Aorta (tissue), 5 donors: ENCODE measurements at regions of chr4 and their contacts with region 1.

Region 1: DNA sequence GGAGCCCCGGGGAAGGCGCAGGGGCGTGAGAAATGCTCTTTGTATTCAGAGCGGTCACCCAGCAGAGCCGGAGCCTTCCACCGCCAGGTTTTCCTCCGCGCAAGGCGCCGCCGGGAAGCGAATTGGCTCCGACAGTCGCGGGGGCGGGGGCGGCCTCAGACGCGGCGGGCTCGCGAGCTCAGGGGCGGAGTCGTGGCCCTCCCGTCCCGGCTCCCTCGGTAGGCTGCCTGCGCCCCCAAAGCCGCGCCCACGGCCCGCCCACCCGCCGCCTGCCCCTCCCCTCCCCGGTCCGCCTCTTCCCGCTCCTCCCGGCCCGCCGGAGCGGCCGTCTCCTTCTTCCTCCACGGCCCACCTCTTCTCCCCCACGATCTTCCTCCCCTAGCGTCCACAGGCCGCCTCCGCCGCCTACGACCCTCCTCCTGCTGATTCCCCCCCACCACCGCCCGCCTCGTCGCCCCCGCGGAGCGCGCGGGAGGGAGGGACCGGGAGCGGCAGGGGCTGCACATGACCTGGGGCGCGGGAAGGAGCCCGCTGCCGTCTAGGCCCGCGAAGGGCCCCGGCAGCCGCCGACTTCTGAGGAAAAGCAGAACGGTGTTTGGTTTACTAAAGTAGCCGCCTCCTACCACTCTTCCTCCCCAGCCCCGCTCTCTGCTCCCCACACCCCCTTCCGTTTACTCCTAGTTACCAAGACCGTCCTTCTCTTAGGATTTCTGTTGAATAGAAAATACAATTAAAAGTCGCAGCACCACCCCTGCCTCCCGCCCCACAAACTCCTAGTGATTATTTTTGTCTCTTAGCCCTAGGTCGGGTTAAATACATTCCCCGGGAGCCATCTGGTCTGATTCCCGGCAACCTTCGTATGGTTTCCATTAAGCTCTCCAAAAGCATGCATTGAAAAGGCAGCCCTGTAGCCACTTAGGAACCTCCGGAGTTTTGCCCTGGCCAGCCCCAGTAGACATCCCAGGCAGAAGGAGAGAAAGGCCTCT is 53.2 kb downstream of the C4orf51 start:
- DNase-seq: peak; percentile 97 to 98
- ATAC-seq: peak; percentile 94
- H3K4me3 ChIP-seq: peak overlapping the region; percentile 28 to 53
- H3K27ac ChIP-seq: peak overlapping the region; percentile 98 to 99
- H3K4me1 ChIP-seq: peaks cover 0 to 2% of the 10 kb centered on the region in 2 donors
- H3K27me3 ChIP-seq: no peaks in the 10 kb centered on the region

Region 2: GRCh38 chr4:145180298-145181090 is 552.7 kb before region 1 on chr4 and contains the start of gene OTUD4:
- intact Hi-C with region 1: loop called in 1 of 2 experiments (anchors 10 kb)
- DNase-seq: peak; percentile 97 to 98
- ATAC-seq: peak; percentile 97
- H3K4me3 ChIP-seq: peak within 1 kb of the TSS; percentile 67 to 84
- H3K27ac ChIP-seq: peak within 1 kb of the TSS; percentile 62 to 77
- H3K4me1 ChIP-seq: peaks cover 3 to 4% of the 10 kb centered on the region in 2 donors
- H3K27me3 ChIP-seq: no peaks in the 10 kb centered on the region
- total RNA-seq, gene OTUD4: 36.9 to 48.7 TPM

Region 3: DNA sequence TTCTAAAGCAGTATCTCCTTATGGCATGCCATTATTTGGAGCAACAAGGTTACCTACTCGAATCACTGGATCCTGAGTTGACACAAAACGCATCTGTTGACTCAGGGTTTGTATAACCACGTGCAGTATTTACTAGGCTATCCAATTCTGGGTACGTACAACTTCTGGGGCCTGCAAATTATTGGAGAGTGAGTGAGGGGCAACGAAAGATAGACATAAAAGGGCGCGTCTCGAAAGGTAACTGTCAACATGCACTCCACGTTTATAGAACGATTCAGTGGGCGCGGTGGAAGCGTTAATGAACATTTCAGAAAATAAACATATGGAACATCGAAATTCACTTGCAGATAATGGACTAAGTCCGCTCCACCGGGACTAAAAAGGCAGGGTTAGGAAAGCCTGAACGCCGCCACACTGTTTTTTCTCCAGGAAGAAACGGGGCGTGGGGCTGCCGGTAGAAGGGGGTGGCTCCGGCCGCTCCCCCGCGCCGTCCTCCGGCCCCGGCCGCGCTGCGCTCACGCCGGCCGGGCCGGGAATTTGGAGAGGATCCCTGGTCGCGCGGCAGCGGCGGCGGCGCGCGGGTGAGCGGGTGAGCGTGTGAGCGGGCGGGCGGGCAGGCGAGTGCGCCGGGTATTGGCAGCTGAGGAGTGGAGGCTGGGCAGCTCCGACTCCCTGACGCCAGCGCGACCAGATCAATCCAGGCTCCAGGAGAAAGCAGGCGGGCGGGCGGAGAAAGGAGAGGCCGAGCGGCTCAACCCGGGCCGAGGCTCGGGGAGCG is 251.8 kb before region 1 on chr4 and contains the start of gene SMAD1:
- intact Hi-C with region 1: loop called in 1 of 2 experiments (anchors 10 kb)
- DNase-seq: peak; percentile 89 to 94
- ATAC-seq: peak; percentile 93
- H3K4me3 ChIP-seq: peak within 1 kb of the TSS; percentile 70 to 86
- H3K27ac ChIP-seq: peak within 1 kb of the TSS; percentile 40 to 74
- H3K4me1 ChIP-seq: no peaks in the 10 kb centered on the region
- H3K27me3 ChIP-seq: no peaks in the 10 kb centered on the region
- total RNA-seq, gene SMAD1: 18.1 to 40.0 TPM

Region 4: DNA sequence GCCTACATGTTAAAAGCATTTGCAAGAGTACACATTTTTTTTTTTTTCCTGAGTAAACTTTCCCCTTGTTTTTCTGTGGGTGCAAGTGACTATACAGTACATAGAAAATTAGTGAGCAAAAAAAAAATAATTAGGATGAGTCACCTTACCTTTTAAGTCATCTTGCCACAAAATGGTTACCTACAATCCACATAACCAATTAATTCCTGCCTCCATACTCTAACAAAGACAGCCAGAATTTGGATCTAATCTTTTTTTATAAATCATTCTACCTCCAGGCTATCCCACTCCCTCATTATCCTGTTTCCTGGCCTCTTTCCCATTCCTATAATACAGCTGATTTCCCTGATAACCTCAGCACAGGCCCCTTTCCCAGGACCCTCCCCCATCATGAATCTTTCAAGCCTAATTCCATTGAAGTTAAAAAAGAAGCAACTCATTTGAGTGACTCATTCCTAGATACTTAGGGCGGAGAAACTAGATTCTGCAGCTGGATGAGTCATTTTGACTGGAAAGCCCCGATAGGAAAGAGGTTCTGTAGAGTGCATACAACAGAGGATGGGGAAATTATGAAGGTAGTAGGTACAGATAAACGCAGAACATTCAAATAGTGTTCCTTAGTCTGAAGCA is 74.9 kb after region 1 on chr4:
- intact Hi-C with region 1: loop called (anchors 5 to 10 kb)
- DNase-seq: no peak
- ATAC-seq: peak; percentile 64
- H3K4me3 ChIP-seq: no peak overlapping the region
- H3K27ac ChIP-seq: no peak overlapping the region
- H3K4me1 ChIP-seq: peaks cover 0 to 5% of the 10 kb centered on the region in 2 donors
- H3K27me3 ChIP-seq: no peaks in the 10 kb centered on the region

Region 5: GRCh38 chr4:145887241-145887991 is 154.2 kb after region 1 on chr4:
- intact Hi-C with region 1: loop called (anchors 2 to 5 kb)
- DNase-seq: no peak
- ATAC-seq: peak; percentile 71
- H3K4me3 ChIP-seq: no peak overlapping the region
- H3K27ac ChIP-seq: peak overlapping the region; percentile 36 to 91
- H3K4me1 ChIP-seq: peaks cover 0 to 4% of the 10 kb centered on the region in 2 donors
- H3K27me3 ChIP-seq: no peaks in the 10 kb centered on the region

Region 6: DNA sequence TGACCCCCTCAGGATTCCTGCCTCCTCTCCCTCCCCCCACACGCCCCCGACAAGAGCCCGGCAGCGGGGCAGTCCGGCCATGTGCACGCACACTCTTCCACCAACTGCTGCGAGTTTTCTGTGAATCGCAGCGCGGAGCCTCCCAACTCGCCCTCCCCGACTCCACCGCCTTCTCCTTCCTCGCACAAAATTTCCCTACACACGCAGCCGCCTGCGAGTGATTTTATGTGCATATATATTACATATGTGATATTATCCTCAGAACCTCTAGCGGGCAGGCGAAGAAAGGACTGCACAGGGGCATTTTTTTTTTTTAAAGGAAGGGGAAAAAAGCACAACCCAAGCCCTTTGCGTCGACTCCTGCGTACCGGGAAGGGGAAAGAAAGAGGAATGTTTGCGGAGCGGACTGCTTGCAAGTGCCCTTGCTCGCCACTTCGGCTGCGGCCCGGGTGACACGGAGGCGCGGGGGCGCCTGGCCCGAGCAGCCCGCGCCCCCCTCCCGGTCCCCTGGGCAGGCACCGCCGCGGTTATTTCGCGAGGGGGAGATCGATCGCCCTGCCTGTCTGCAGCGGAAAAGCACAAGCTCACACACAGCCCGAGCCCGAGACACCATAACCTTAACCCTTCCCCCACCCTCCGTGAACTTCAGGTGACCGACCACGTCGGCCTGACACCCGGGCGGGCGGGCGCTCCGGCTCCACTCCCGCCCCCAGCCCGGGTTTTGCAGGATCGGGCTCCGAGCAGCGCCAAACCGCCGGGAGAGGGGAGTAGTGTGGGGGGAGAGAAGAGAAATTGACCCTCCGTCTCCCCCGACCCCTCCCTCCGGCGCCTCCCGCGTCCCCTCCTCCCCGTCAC is 203.2 kb after region 1 on chr4:
- intact Hi-C with region 1: loop called (anchors 1 to 5 kb)
- DNase-seq: peak; percentile 78 to 87
- ATAC-seq: peak; percentile 73
- H3K4me3 ChIP-seq: peak overlapping the region; percentile 92 to 100
- H3K27ac ChIP-seq: peak overlapping the region; percentile 74 to 99
- H3K4me1 ChIP-seq: peaks cover 4 to 5% of the 10 kb centered on the region in 2 donors
- H3K27me3 ChIP-seq: no peaks in the 10 kb centered on the region